ENCODE measurements at regions of chr16 and their contacts with region 1.

Region 1: GRCh38 chr16:85908444-85908843 is 9.5 kb downstream of the IRF8 start:
- DNase-seq: peak; percentile 20
- ATAC-seq: peak; percentile 60
- H3K4me3 Mint-ChIP-seq: peak overlapping the region; percentile 77
- H3K27ac Mint-ChIP-seq: peak overlapping the region; percentile 97
- H3K4me1 Mint-ChIP-seq: peaks cover 99% of the 10 kb centered on the region
- H3K27me3 Mint-ChIP-seq: no peaks in the 10 kb centered on the region
- CTCF ChIP-seq: no peak

Region 2: GRCh38 chr16:85928401-85928820 is 20.0 kb after region 1 on chr16:
- CTCF ChIA-PET with region 1: interaction called, 4 read pairs
- POLR2A ChIA-PET with region 1: interaction called, 41 read pairs
- intact Hi-C with region 1: no loop called
- DNase-seq: no peak
- ATAC-seq: peak; percentile 29
- H3K4me3 Mint-ChIP-seq: peak overlapping the region; percentile 68
- H3K27ac Mint-ChIP-seq: peak overlapping the region; percentile 80
- H3K4me1 Mint-ChIP-seq: peaks cover 86% of the 10 kb centered on the region
- H3K27me3 Mint-ChIP-seq: no peaks in the 10 kb centered on the region
- CTCF ChIP-seq: no peak

Region 3: DNA sequence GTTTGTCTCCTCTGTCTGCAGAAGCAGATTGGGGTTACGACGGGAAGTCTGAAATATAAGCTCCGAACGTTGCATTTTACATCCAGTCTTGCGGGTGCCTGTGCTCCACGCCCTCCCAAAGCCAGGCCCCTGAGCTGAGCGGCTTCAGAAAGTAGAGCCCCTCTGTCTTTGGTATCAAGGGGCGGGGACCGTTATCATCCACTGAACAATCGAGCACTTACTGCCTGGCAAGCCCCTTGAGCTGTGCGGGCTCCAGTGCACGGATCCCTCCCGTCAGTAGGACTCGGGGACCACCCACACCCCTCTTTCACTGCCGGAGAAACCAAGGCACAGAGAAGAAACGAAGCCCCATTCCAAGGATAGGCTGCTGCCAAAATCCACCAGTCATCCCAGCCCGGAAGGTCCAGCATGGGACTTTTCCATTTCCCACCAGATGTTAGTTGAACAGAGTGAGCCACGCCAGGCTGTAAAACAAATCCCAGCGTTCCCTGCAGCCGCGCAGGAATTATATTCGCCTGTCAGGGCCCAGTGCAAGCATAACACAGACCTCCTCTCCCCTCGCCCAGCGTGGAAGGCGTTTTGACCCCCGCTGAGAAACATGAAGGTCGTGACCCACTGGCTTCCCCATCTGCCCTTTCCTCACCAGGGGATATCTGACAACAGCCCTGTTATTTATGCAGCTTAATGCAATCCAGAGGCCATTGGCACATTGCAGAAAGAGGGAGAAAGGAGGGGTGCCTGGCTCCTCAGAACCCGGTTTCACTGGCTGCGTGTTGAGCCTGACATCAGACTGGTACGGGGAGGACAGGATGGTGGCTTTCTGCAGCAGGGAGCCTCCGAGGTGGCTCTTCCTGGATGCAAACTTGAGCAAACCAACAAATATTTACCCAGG is 389.7 kb after region 1 on chr16:
- CTCF ChIA-PET with region 1: no interaction called
- POLR2A ChIA-PET with region 1: no interaction called
- intact Hi-C with region 1: no loop called
- DNase-seq: no peak
- ATAC-seq: no peak
- H3K4me3 Mint-ChIP-seq: no peak overlapping the region
- H3K27ac Mint-ChIP-seq: no peak overlapping the region
- H3K4me1 Mint-ChIP-seq: peaks cover 1% of the 10 kb centered on the region
- H3K27me3 Mint-ChIP-seq: peaks cover 62% of the 10 kb centered on the region
- CTCF ChIP-seq: no peak